ENCODE measurements at regions of chr11 and their contacts with region 1.

Region 1: DNA sequence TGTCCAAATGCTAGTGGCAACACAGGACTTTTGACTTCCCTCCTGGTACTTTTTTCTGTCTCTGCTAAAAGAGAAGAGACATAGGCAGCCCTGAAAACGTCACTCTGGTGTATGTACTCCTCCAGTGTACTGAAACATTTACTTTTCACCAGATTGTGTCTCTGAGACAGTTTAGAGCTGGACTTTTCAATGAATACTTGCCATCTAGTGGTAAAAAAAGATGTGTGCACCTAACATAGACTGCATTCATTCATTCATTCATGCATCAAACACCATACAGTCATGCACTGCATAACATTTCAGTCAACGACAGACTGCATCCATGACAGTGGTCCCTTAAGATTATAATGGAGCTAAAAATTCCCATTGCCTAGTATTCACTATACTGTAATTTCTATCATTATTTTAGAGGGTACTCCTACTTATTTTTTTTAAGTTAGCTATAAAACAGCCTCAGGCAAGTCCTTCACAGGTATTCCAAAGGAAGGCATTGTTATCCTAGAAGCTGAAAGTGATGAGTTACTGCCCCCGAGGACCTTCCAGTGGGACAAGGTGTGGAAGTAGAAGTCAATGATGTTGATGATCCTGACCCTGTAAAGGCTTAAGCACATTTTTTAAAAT is 186.2 kb downstream of the SPON1 start:
- DNase-seq: no peak
- H3K4me3 Mint-ChIP-seq: no peak overlapping the region
- H3K27ac Mint-ChIP-seq: no peak overlapping the region
- H3K4me1 Mint-ChIP-seq: no peaks in the 10 kb centered on the region
- H3K27me3 Mint-ChIP-seq: peaks cover 38% of the 10 kb centered on the region
- CTCF ChIP-seq: no peak

Region 2: DNA sequence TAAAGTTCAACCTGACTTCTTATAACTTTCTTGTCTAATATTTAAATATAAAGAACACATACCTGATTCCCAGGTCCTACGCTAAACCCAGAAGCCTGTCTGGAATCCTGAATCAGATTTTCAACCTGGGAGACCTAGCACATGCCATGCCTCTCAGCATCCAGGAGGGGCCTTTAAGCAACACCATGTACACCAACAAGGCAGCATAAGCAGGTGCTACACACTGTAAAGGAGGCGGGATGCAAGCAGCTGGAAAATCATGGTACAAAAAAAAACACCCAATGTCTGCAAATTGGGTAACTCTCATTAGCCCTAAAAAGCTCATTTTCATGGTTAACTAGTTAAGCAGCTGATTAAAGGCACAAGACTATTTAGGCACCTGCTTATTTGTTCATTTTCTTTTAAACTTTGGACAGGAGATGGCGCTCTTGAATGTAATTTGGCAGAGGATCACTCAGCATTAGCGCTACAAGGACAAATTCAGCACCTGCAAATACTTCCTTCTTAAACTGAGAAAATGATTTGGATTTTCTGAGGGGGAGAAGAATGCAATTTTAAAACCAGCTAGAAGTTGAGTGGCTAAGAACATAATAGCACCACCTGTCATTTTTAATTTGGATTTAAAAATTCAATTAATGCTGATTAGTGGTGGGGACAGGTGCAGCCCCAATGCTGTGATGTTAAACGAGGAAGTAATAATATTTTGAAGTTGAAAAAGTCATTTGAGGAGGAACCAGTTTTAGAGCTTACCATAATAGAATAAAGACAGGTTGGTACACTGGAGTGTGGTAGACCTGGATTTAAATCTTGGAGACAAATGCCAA is 376.3 kb before region 1 on chr11:
- CTCF ChIA-PET with region 1: interaction called, 10 read pairs
- intact Hi-C with region 1: loop called (anchors 1 kb)
- DNase-seq: peak; percentile 49
- H3K4me3 Mint-ChIP-seq: no peak overlapping the region
- H3K27ac Mint-ChIP-seq: no peak overlapping the region
- H3K4me1 Mint-ChIP-seq: no peaks in the 10 kb centered on the region
- H3K27me3 Mint-ChIP-seq: peaks cover 56% of the 10 kb centered on the region
- CTCF ChIP-seq: peak; percentile 67

Region 3: DNA sequence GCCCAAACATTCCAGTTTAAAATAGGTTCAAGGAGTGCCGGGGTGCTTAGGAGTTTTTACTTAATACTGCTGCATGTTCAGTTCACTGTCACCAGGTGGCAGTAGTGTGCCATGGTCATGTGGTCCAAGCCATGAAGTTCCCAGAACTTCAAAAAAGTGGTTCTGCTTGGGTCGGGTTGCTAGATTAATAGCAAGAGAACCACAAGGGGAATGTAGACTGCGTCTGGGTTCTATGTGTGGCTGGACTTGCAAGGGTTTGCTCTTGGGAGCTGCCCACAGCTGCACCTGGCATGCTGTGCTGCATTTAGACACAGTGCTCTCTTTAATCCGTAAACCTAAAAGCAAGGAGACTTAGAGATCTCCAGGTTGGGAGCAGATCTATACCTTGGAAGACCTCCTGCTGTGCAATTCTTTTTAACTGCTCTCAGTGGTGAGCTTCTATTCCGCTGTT is 192.8 kb before region 1 on chr11:
- CTCF ChIA-PET with region 1: interaction called, 3 read pairs
- intact Hi-C with region 1: loop called (anchors 1 kb)
- DNase-seq: peak; percentile 43
- H3K4me3 Mint-ChIP-seq: no peak overlapping the region
- H3K27ac Mint-ChIP-seq: no peak overlapping the region
- H3K4me1 Mint-ChIP-seq: no peaks in the 10 kb centered on the region
- H3K27me3 Mint-ChIP-seq: no peaks in the 10 kb centered on the region
- CTCF ChIP-seq: peak; percentile 73

Region 4: DNA sequence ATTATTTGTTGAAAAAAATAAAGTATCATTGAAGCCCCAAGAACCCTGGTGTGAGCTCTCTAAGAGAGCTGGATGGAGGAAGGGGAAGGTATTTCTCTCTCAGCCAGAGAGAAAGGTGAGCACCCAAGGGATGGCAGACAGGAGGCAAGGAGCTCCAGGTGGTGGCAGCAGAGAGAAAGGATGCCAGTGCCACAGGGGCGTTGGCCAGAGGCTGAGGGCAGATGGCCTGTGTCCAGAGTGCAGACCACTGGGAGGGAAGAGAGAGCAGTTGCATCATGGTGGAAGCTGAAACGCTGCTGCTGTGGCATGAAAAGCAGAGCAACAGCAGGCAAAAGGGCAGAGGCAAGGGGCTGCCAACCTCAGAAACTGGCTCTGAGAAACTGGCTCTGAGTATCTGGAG is 177.8 kb before region 1 on chr11:
- CTCF ChIA-PET with region 1: interaction called, 26 read pairs
- intact Hi-C with region 1: loop called (anchors 1 kb)
- DNase-seq: peak; percentile 76
- H3K4me3 Mint-ChIP-seq: no peak overlapping the region
- H3K27ac Mint-ChIP-seq: no peak overlapping the region
- H3K4me1 Mint-ChIP-seq: peaks cover 7% of the 10 kb centered on the region
- H3K27me3 Mint-ChIP-seq: peaks cover 43% of the 10 kb centered on the region
- CTCF ChIP-seq: peak; percentile 60

Region 5: GRCh38 chr11:14041040-14041439 is 107.7 kb before region 1 on chr11:
- CTCF ChIA-PET with region 1: interaction called, 4 read pairs
- intact Hi-C with region 1: loop called (anchors 5 kb)
- DNase-seq: no peak
- H3K4me3 Mint-ChIP-seq: no peak overlapping the region
- H3K27ac Mint-ChIP-seq: no peak overlapping the region
- H3K4me1 Mint-ChIP-seq: no peaks in the 10 kb centered on the region
- H3K27me3 Mint-ChIP-seq: peaks cover 36% of the 10 kb centered on the region
- CTCF ChIP-seq: peak; percentile 49

Region 6: DNA sequence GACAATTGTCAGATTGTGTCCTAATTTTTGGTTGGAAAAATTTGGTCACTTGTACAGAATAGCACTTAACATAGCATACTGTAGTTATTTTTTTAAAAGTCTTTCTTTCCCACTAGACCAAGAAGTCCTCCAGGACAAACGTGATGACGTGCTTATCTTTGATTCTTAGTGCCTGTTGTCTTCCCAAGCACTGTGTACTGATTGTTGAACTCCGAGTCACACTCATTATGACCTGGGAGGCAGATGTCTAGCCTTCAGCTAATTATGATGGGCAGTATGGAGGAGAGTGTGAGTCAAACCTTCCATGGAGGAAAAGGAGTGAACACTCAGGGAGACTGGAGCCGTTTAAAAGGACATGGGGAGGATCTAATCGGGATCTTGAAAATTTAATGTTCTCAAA is 66.4 kb before region 1 on chr11:
- CTCF ChIA-PET with region 1: no interaction called
- intact Hi-C with region 1: loop called (anchors 5 kb)
- DNase-seq: no peak
- H3K4me3 Mint-ChIP-seq: no peak overlapping the region
- H3K27ac Mint-ChIP-seq: no peak overlapping the region
- H3K4me1 Mint-ChIP-seq: no peaks in the 10 kb centered on the region
- H3K27me3 Mint-ChIP-seq: peaks cover 70% of the 10 kb centered on the region
- CTCF ChIP-seq: no peak

Region 7: GRCh38 chr11:14249121-14249963 is 100.6 kb after region 1 on chr11:
- CTCF ChIA-PET with region 1: no interaction called
- intact Hi-C with region 1: loop called (anchors 1 kb)
- DNase-seq: peak; percentile 54
- H3K4me3 Mint-ChIP-seq: no peak overlapping the region
- H3K27ac Mint-ChIP-seq: no peak overlapping the region
- H3K4me1 Mint-ChIP-seq: peaks cover 1% of the 10 kb centered on the region
- H3K27me3 Mint-ChIP-seq: peaks cover 31% of the 10 kb centered on the region
- CTCF ChIP-seq: peak; percentile 77

Region 8: GRCh38 chr11:14435717-14436512 is 287.2 kb after region 1 on chr11:
- CTCF ChIA-PET with region 1: no interaction called
- intact Hi-C with region 1: no loop called
- DNase-seq: no peak
- H3K4me3 Mint-ChIP-seq: no peak overlapping the region
- H3K27ac Mint-ChIP-seq: no peak overlapping the region
- H3K4me1 Mint-ChIP-seq: no peaks in the 10 kb centered on the region
- H3K27me3 Mint-ChIP-seq: no peaks in the 10 kb centered on the region
- CTCF ChIP-seq: no peak

Measured in Calu3 (cell line).